Activated CD4-positive, alpha-beta T cell treated with anti-CD3 and anti-CD28 coated beads, Interleukin-2, amount 10 ng/mL, durations not matched to agents 7 days and 5 days (primary cell): ENCODE measurements at regions of chr9 and their contacts with region 1.

Region 1: DNA sequence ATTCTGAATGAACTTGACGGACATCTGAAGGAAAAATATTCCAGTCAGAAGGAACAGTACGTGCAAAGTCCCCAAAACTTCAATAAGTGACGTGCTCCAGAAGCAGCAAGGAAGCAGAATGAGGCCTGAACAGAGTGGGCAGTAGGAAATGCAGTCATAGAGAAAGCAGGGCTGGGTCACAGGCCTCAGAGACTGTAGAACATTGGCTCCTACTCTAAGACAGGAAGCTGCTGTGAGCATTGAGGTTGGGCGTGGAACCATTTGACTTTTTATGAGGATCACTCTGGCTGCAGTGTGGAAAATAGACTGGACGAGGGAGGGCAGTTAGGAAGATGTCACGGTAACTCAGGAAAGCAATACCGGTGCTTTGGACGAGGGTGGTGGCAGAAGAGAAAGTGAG is 64.0 kb downstream of the DOCK8 start:
- DNase-seq: peak; percentile 65
- H3K4me3 Mint-ChIP-seq: no peak overlapping the region
- H3K27ac Mint-ChIP-seq: no peak overlapping the region
- H3K4me1 Mint-ChIP-seq: peaks cover 36% of the 10 kb centered on the region
- H3K27me3 Mint-ChIP-seq: no peaks in the 10 kb centered on the region

Region 2: GRCh38 chr9:297104-297972 is 18.7 kb after region 1 on chr9:
- CTCF ChIA-PET with region 1: interaction called, 17 read pairs
- POLR2A ChIA-PET with region 1: no interaction called
- DNase-seq: no peak
- H3K4me3 Mint-ChIP-seq: no peak overlapping the region
- H3K27ac Mint-ChIP-seq: no peak overlapping the region
- H3K4me1 Mint-ChIP-seq: peaks cover 43% of the 10 kb centered on the region
- H3K27me3 Mint-ChIP-seq: no peaks in the 10 kb centered on the region